ENCODE measurements at regions of chr18 and their contacts with region 1.

Region 1: DNA sequence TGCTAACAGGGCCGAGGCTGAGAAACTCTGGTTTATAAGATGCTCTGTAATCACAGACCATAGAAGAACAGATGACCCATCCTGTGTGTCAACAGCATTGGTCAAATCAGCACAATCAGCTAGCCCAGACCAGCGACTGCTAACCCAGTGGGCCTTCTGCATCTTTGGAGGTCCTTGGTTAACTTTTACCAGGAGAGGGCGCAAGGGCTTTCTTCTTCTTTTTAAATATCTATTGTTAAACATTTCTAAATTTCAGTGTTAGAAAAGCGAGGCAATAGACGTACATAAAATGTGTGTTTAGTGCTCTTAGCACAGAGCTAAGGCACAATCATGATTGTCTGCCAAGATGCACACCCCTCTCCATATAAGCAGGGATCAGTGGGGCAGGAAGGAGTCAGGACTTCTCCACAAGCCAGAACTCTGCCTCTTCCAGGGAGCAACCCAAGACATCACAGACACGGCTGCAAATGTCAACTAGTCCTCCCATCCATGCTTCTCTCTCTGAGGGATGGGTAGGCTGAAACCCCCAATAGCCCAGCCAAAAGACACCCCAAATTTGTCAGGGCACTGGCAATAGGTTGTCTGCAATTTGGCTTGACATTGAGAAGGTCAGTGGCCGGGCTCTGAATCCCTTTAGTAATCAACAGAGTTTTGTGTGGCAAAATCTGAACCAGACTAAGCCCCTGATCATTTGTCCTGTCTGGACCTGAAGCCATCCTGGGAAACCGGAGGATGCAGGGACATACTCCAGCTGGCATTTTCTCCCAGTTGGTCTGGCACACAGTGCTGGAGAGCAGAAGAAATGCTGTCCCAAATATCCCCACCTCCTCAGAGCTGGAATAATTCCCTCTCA is 188.2 kb downstream of the BCL2 start:
- DNase-seq: no peak
- CTCF ChIP-seq: peak; percentile 47

Region 2: DNA sequence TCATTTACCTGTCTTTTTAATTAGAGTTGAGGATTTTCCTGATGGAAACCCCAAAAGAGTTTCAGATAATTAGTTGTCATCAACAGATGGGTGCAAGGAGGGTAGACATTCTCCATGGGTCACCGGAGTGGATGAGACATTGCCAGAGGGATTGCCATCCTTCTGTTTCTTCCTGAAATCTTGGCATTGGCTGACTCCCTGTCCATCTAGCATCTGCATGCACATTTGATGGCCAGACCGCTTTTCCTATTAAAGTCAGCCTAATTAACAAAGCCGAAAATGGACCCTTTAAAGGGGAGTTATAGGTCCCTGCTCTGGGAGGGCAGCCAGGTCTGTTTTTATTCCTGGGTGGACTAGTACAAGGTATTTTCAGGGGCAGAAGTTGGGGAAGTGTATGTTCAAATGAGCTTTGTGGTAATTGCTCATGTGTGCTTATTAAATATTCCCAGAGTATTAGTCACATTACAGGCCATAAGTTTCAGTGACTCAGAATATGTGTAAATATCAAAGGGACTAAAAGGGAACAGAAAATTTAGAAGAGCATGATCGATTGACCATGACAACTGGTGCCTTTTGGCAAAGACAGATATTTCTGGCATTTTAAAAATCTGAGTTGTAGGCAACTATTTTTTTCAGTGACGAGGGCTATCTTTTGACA is 206.2 kb before region 1 on chr18:
- CTCF ChIA-PET with region 1: no interaction called
- POLR2A ChIA-PET with region 1: no interaction called
- DNase-seq: no peak
- CTCF ChIP-seq: no peak

Region 3: DNA sequence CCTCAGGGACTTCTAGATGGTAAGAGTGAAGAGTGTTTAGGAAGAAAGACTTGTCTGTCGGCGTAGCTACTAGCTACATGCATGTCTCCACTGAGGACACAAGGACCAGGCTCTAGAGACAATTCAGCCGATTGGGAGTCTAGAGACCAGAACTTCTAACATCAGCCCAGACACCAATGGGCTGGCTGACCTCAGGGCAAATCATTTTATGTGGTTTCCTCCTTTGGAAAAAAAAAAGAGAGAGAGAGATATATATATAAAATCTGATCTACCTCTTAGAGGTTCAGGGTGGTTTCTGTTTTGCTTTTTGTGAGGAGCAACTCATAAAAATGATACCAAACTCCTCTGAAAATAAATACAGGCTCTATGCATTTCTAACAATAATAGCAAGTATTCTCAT is 24.6 kb before region 1 on chr18:
- CTCF ChIA-PET with region 1: interaction called, 11 read pairs
- POLR2A ChIA-PET with region 1: no interaction called
- DNase-seq: peak; percentile 28
- CTCF ChIP-seq: no peak

Region 4: DNA sequence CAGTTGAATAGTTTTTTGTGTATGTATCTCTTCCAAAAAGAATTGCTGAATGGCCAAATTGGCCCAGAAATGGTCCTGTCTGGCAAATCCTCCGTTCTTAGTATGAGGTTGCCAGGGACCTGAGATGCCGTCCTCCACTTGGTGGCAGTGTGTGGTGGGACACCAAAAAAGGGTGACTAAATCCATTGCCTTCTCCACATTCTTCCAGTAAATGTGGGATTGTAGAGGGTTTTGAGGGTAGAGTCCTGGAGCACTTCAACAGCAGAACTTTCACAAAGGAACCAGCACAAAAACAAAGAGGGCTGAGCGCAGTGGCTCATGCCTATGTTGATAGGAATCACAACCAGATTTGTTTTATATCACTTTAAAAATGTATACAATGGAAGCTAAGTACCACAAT is 11.7 kb before region 1 on chr18:
- CTCF ChIA-PET with region 1: interaction called, 26 read pairs
- POLR2A ChIA-PET with region 1: interaction called, 3 read pairs
- DNase-seq: no peak
- CTCF ChIP-seq: peak; percentile 48

Region 5: GRCh38 chr18:63311118-63312018 is 180.0 kb after region 1 on chr18:
- CTCF ChIA-PET with region 1: interaction called, 12 read pairs
- POLR2A ChIA-PET with region 1: interaction called, 3 read pairs
- DNase-seq: peak; percentile 44
- CTCF ChIP-seq: no peak

Region 6: GRCh38 chr18:63378919-63379638 is 247.7 kb after region 1 on chr18:
- CTCF ChIA-PET with region 1: no interaction called
- POLR2A ChIA-PET with region 1: no interaction called
- DNase-seq: peak; percentile 28
- CTCF ChIP-seq: no peak

Measured in GM10248 (cell line).